ENCODE measurements at regions of chr18 and their contacts with region 1.

Region 1: GRCh38 chr18:74495581-74496507 is at the start of gene CNDP2:
- DNase-seq: peak; percentile 98 to 100
- H3K4me3 ChIP-seq: peak within 1 kb of the TSS; percentile 75 to 87
- H3K27ac ChIP-seq: peak within 1 kb of the TSS; percentile 88 to 97
- H3K4me1 ChIP-seq: peaks cover 0 to 9% of the 10 kb centered on the region in 2 donors
- H3K27me3 ChIP-seq: no peaks in the 10 kb centered on the region
- CTCF ChIP-seq: no peak
- total RNA-seq, gene CNDP2: 33.5 TPM

Region 2: DNA sequence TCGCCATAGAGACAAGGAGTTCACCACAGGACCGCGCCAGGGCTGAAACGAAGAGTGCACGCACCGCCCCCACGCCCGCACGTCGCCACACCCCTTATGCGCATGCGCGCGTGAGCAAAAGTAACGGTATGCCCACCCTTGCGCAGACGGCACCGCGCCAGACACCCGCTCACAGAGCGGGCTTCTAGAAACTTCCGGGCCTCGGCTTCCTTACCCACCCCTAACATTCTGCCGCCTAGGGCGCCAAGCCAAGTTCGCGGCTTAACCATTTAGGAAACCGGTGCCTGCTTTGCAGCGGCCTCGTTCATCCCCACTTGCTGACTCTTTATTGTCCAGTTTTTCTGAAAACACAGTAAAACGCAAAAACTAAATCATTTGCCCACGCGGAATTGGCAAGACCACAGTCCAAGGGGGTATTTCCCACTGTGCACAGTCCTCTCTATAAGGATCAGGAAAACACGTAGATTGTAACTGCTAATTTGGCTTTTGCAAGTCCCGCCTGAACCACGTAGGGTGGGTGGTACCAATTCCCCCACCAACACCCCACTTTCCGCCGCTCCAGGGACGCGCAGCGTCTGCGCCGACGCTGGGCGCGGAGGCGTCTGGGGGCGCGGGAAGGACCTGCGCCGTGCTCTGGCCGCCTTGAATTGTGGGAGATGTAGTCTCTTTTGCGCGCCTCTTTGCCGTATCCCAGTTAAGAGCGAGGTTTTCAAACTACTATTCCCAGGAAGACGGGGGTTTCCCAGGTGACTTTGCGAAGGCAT is 347.9 kb before region 1 on chr18 and contains the starts of genes FBXO15 and TIMM21:
- intact Hi-C with region 1: loop called (anchors 1 kb)
- DNase-seq: peak; percentile 82 to 97
- H3K4me3 ChIP-seq: peak within 1 kb of the TSS; percentile 78 to 90
- H3K27ac ChIP-seq: peak within 1 kb of the TSS; percentile 84 to 95
- H3K4me1 ChIP-seq: peaks cover 4 to 12% of the 10 kb centered on the region in 2 donors
- H3K27me3 ChIP-seq: no peaks in the 10 kb centered on the region
- CTCF ChIP-seq: no peak
- total RNA-seq, gene FBXO15: not detected
- total RNA-seq, gene TIMM21: 27.2 TPM

Region 3: DNA sequence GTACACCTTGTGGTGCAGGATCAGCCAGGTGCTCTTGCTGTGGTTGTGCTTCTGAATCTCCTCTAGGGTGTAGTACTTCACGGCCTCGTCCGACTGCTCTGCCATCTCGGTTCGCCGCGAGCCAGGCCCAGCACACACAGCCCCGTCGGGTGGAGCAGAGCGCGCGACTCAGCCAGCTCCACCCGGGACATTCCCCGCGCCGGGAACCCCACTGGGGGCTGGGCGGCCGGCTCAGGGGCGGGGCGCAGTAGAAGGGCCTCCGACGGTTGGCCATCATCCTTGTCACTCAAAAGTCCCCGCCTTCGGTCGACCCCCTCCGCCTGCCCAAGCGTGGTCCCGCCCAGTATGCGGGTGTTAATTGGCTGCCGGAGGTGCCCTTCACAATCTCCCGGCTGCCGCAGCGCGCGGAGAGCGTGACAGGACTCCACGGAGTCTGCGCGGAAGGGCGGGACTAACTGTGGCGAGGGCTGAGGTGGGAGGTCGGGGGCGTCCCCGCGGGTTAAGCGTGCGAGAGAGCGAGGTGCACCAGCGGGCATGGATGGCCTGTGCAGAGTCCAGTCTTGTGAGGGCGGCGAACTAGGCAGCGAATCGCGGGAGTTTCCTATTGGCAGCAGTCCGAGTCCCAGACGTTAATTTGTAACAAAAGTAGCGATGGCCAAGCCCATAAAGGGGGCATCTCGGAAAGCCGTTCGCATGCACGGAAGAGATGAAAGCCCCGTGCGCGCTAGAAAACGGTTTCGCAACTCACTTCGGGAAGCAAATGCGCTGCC is 203.9 kb before region 1 on chr18 and contains the start of gene CYB5A:
- intact Hi-C with region 1: loop called (anchors 1 kb)
- DNase-seq: peak; percentile 87 to 99
- H3K4me3 ChIP-seq: peak within 1 kb of the TSS; percentile 63 to 87
- H3K27ac ChIP-seq: peak within 1 kb of the TSS; percentile 30 to 58
- H3K4me1 ChIP-seq: peaks cover 5 to 8% of the 10 kb centered on the region in 2 donors
- H3K27me3 ChIP-seq: no peaks in the 10 kb centered on the region
- CTCF ChIP-seq: no peak
- total RNA-seq, gene CYB5A: 58.1 TPM

Region 4: DNA sequence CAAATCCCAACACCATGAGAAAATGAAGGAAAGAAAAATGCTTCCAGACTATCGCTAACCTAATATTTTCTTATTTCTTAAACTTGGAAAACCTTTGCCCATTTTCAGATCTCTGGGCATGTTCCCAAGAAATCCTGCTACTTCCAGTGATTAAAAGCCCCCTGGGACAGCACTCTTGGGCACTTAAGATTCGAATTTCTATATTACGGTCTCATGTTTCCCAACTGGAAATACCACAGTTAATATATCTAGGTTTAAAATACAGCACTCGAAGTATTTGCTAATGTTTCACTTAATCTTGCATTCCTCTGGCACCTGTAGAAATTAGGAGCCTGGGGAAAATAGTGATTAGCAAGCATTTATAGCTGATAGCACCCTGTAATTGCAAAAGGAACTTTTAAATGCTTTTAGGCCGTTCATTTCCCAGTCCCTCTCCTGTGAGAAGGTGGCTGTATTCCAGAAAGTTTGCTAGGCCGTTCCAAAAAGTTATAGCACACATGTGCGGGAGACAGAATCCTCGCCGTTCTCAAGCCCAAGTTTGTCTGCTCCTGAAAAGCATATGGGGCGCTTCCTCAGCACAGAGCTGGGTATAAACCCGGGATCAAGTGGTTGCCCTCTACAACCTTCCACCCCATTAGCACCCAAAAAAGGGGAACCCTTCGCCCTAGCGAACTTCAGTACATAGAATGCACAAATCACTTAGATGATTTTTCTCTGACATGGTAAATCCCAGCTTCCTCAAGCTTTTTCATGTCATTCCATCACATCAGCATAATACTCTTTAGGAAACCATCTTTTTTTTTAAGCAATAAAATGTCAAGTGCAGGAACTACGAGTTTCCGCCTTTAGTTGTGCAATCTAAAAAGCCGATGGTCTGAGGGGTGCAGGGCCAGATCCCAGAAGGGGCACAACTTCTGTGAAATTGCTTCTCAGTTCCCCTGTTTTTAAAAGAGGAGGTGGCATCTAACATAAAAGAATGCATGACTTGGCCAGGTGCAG is 99.4 kb before region 1 on chr18:
- intact Hi-C with region 1: no loop called
- DNase-seq: peak in 1 of 2 donors; percentile 55
- H3K4me3 ChIP-seq: peak overlapping the region; percentile 24 to 32
- H3K27ac ChIP-seq: peak overlapping the region; percentile 68 to 74
- H3K4me1 ChIP-seq: peaks cover 0 to 15% of the 10 kb centered on the region in 2 donors
- H3K27me3 ChIP-seq: no peaks in the 10 kb centered on the region
- CTCF ChIP-seq: no peak

Region 5: GRCh38 chr18:74551936-74552555 is 56.2 kb after region 1 on chr18:
- intact Hi-C with region 1: loop called (anchors 5 kb)
- DNase-seq: peak; percentile 31 to 89
- H3K4me3 ChIP-seq: no peak overlapping the region
- H3K27ac ChIP-seq: no peak overlapping the region
- H3K4me1 ChIP-seq: no peaks in the 10 kb centered on the region
- H3K27me3 ChIP-seq: no peaks in the 10 kb centered on the region
- CTCF ChIP-seq: peak; percentile 49 to 77 (median 72)

Region 6: GRCh38 chr18:76450452-76451395 is 1954.9 kb after region 1 on chr18:
- intact Hi-C with region 1: loop called (anchors 10 kb)
- DNase-seq: peak in 1 of 2 donors; percentile 68
- H3K4me3 ChIP-seq: peak overlapping the region; percentile 59 to 62
- H3K27ac ChIP-seq: peak overlapping the region; percentile 58 to 73
- H3K4me1 ChIP-seq: peaks cover 1 to 13% of the 10 kb centered on the region in 2 donors
- H3K27me3 ChIP-seq: no peaks in the 10 kb centered on the region
- CTCF ChIP-seq: no peak

Measured in ascending aorta (tissue), 2 donors.